ENCODE measurements at regions of chr16 and their contacts with region 1.

Region 1: DNA sequence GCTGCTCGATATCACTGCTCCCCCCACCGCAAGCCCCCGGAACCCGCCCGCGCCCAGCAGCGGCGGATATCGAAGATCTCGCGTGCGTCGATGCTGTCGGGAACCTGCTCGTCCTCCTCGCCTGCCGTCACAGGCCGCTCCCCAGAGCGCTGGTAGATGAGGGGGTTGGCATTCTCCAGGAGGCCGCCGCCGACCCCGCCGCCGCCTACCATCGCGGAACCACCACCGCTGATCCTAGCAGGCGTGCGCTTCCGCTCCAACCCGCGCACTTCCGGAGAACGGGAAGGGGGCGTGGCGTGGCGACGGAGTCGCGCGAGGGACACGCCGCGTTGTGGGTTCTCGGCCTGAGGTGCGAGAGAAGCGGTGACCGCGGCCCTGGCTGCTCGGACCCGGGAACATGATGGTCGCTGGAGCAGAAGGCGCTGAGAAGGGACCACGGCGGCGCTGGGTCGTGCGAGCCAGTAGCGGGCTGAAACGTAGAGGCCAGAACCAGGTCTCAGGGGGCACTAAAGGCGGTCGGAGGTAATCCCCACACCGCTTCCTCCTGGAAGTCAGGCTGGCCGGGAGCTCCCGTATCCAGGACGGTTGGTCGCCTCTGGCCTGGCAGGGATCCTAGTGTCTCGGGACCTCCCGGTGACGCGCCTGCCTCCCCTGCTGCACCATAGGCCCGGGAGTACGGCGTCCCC is at the start of gene CIAO2B:
- DNase-seq: peak; percentile 80 to 94 (median 90)
- ATAC-seq: peak; percentile 92
- H3K4me3 ChIP-seq: peak within 1 kb of the TSS; percentile 90 to 98
- H3K4me3 Mint-ChIP-seq: peak within 1 kb of the TSS; percentile 97
- H3K27ac ChIP-seq: peak within 1 kb of the TSS; percentile 94
- H3K27ac Mint-ChIP-seq: peak within 1 kb of the TSS; percentile 98
- H3K4me1 ChIP-seq: peaks cover 36% of the 10 kb centered on the region
- H3K4me1 Mint-ChIP-seq: peaks cover 57% of the 10 kb centered on the region
- H3K27me3 ChIP-seq: no peaks in the 10 kb centered on the region
- H3K27me3 Mint-ChIP-seq: no peaks in the 10 kb centered on the region
- CTCF ChIP-seq: no peak
- total RNA-seq, gene CIAO2B: 55.0 to 58.2 TPM

Region 2: GRCh38 chr16:66830422-66831404 is 103.6 kb before region 1 on chr16 and contains the start of gene NAE1:
- CTCF ChIA-PET with region 1: no interaction called
- POLR2A ChIA-PET with region 1: no interaction called
- intact Hi-C with region 1: loop called in 1 of 2 experiments (anchors 5 kb)
- DNase-seq: peak; percentile 78 to 95 (median 88)
- ATAC-seq: peak; percentile 97
- H3K4me3 ChIP-seq: peak within 1 kb of the TSS; percentile 66 to 82
- H3K4me3 Mint-ChIP-seq: peak within 1 kb of the TSS; percentile 77
- H3K27ac ChIP-seq: peak within 1 kb of the TSS in 1 of 2 experiments; percentile 72
- H3K27ac Mint-ChIP-seq: peak within 1 kb of the TSS; percentile 45
- H3K4me1 ChIP-seq: peaks cover 18% of the 10 kb centered on the region
- H3K4me1 Mint-ChIP-seq: peaks cover 34% of the 10 kb centered on the region
- H3K27me3 ChIP-seq: no peaks in the 10 kb centered on the region
- H3K27me3 Mint-ChIP-seq: peaks cover 2% of the 10 kb centered on the region
- CTCF ChIP-seq: peak; percentile 98
- total RNA-seq, gene NAE1: 91.9 to 95.9 TPM

Region 3: DNA sequence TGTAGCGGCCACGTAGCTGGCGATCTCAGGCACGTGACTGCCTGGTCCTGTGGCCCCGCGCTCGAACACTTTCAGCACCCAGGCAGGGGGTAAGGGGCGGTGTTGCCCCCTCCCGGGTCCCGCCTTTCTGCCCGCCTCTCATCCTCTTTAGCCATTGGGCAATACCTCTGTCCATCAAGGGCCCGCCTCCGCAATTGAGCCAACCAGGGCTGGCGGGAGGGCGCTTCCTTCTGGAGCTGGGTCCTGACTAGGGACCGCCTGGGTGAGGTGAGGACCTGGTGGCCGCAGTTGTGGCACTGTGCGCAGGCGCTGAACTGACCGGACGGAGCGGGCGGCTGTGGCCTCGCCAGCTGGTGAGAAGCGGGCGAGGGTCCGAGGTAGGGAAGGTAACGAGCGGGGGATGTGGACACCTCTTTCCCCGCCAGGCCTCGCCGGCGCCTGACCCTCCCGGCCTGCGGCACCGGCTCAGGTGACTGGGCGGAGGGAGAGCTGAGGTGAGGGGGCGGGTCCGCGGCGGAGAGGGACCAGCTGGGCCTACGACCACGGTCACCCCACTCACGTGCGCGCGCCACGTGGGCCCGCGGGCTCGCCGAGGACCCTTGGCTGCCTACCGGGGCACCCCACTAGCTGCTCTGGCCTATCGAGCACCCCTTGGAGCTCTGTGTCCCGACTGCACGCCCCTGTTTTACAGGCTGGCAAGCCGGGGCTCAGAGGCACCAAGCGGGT is 53.8 kb before region 1 on chr16 and contains the start of gene PDP2:
- CTCF ChIA-PET with region 1: no interaction called
- POLR2A ChIA-PET with region 1: interaction called, 6 read pairs
- intact Hi-C with region 1: loop called in 1 of 2 experiments (anchors 5 kb)
- DNase-seq: peak; percentile 75 to 95 (median 89)
- ATAC-seq: peak; percentile 97
- H3K4me3 ChIP-seq: peak within 1 kb of the TSS; percentile 81 to 95
- H3K4me3 Mint-ChIP-seq: peak within 1 kb of the TSS; percentile 99
- H3K27ac ChIP-seq: peak within 1 kb of the TSS; percentile 47 to 54
- H3K27ac Mint-ChIP-seq: peak within 1 kb of the TSS; percentile 94
- H3K4me1 ChIP-seq: peaks cover 7% of the 10 kb centered on the region
- H3K4me1 Mint-ChIP-seq: peaks cover 27% of the 10 kb centered on the region
- H3K27me3 ChIP-seq: no peaks in the 10 kb centered on the region
- H3K27me3 Mint-ChIP-seq: no peaks in the 10 kb centered on the region
- CTCF ChIP-seq: no peak
- total RNA-seq, gene PDP2: 5.1 to 6.1 TPM

Region 4: GRCh38 chr16:66947302-66948065 is 13.2 kb after region 1 on chr16:
- CTCF ChIA-PET with region 1: interaction called, 4 read pairs
- POLR2A ChIA-PET with region 1: interaction called, 3 read pairs
- intact Hi-C with region 1: loop called in 1 of 2 experiments (anchors 1 kb)
- DNase-seq: peak; percentile 67 to 90 (median 85)
- ATAC-seq: peak; percentile 94
- H3K4me3 ChIP-seq: peak overlapping the region; percentile 58 to 65
- H3K4me3 Mint-ChIP-seq: peak overlapping the region; percentile 89
- H3K27ac ChIP-seq: no peak overlapping the region
- H3K27ac Mint-ChIP-seq: no peak overlapping the region
- H3K4me1 ChIP-seq: peaks cover 17% of the 10 kb centered on the region
- H3K4me1 Mint-ChIP-seq: peaks cover 19% of the 10 kb centered on the region
- H3K27me3 ChIP-seq: peaks cover 0 to 19% of the 10 kb centered on the region in 2 experiments
- H3K27me3 Mint-ChIP-seq: peaks cover 22% of the 10 kb centered on the region
- CTCF ChIP-seq: peak; percentile 89

Region 5: DNA sequence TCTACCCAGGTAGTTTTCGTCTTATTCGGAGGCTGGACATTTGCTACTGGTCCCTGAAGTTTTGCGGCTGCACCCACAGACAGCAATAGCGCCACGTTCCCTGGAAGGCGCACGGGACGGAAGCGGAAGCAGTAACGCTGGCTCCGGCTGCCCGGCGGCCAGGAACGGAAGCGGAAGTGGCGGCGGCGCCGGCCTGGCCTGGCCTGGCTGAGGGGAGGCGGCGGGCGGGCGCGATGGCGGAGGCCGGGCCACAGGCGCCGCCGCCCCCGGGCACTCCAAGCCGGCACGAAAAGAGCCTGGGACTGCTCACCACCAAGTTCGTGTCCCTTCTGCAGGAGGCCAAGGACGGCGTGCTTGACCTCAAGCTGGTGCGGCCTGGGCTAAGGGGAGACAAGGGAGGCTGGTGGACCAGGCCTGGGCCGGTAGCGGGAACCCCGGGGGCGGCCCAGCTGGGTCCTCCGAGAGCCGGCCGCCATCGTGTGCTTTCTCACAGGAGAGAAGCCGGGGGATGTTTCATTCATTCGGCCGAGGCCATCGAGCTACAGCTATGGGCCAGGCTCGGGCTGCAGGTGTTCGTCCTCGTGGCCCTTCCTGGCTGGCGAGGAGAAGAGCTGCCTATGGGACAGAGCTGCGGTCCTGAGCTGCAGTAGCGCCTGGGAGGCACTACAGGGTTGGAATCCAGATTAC is 257.8 kb after region 1 on chr16 and contains the start of gene E2F4:
- CTCF ChIA-PET with region 1: no interaction called
- POLR2A ChIA-PET with region 1: no interaction called
- intact Hi-C with region 1: loop called in 1 of 2 experiments (anchors 1 kb)
- DNase-seq: peak; percentile 72 to 94 (median 83)
- ATAC-seq: peak; percentile 86
- H3K4me3 ChIP-seq: peak within 1 kb of the TSS; percentile 84 to 100
- H3K4me3 Mint-ChIP-seq: peak within 1 kb of the TSS; percentile 89
- H3K27ac ChIP-seq: peak within 1 kb of the TSS; percentile 84 to 86
- H3K27ac Mint-ChIP-seq: peak within 1 kb of the TSS; percentile 89
- H3K4me1 ChIP-seq: peaks cover 27% of the 10 kb centered on the region
- H3K4me1 Mint-ChIP-seq: peaks cover 45% of the 10 kb centered on the region
- H3K27me3 ChIP-seq: peaks cover 0 to under 1% of the 10 kb centered on the region in 2 experiments
- H3K27me3 Mint-ChIP-seq: peaks cover 2% of the 10 kb centered on the region
- CTCF ChIP-seq: no peak
- total RNA-seq, gene E2F4: 61.9 to 63.8 TPM

Region 6: DNA sequence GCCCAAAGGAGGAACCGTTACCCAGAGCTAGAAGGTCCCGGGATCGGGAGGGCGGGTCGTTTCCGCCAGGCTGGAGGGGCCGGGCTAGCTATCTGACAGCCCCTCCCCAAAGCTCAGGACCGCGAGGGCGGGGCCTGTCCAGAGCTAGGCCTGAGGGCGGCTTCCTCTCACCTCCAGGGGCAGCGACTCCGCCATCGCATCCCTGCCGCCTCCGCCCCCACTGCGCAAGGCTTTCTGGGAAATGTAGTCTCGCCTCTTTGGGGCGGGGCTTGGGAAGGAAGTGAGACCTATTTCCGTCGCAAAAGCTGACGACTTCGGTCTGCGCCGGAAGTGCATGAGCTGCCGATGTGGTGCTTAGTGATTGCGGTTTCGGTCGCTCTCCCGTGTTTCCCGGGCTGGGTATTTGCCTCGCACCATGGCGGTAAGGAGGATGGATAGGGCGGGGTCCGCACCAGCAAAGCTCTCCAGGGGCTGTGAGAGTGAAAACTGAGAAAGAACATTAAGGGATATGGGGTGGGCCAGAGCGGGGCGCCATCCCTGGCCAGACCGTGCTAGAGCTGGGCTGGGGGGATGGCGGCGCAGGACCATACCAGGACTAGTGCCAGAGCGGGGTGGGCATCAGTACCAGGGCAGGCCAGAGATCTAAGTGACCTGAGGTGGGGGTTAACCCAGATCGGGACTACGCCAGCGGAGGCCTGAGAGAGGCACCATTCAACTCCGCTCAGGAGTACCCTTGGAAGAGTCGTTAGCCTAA is 292.7 kb after region 1 on chr16 and contains the start of gene TMEM208:
- CTCF ChIA-PET with region 1: no interaction called
- POLR2A ChIA-PET with region 1: no interaction called
- intact Hi-C with region 1: loop called (anchors 1 kb)
- DNase-seq: peak; percentile 95 to 99 (median 98)
- ATAC-seq: peak; percentile 98
- H3K4me3 ChIP-seq: peak within 1 kb of the TSS; percentile 95 to 100
- H3K4me3 Mint-ChIP-seq: peak within 1 kb of the TSS; percentile 100
- H3K27ac ChIP-seq: peak within 1 kb of the TSS; percentile 83 to 93
- H3K27ac Mint-ChIP-seq: peak within 1 kb of the TSS; percentile 98
- H3K4me1 ChIP-seq: peaks cover 26% of the 10 kb centered on the region
- H3K4me1 Mint-ChIP-seq: peaks cover 47% of the 10 kb centered on the region
- H3K27me3 ChIP-seq: no peaks in the 10 kb centered on the region
- H3K27me3 Mint-ChIP-seq: no peaks in the 10 kb centered on the region
- CTCF ChIP-seq: no peak
- total RNA-seq, gene TMEM208: 37.1 to 44.7 TPM